Activated B cell treated with CpG ODN at 0.5 μM for 24 hours (primary cell): ENCODE measurements at regions of chr22 and their contacts with region 1.

Region 1: GRCh38 chr22:23716811-23717801 is 26.3 kb downstream of the RGL4 start:
- DNase-seq: peak; percentile 81
- ATAC-seq: peak; percentile 97
- H3K4me3 Mint-ChIP-seq: peak overlapping the region; percentile 81
- H3K27ac Mint-ChIP-seq: peak overlapping the region; percentile 69
- H3K4me1 Mint-ChIP-seq: peaks cover 16% of the 10 kb centered on the region
- H3K27me3 Mint-ChIP-seq: no peaks in the 10 kb centered on the region
- CTCF ChIP-seq: no peak

Region 2: DNA sequence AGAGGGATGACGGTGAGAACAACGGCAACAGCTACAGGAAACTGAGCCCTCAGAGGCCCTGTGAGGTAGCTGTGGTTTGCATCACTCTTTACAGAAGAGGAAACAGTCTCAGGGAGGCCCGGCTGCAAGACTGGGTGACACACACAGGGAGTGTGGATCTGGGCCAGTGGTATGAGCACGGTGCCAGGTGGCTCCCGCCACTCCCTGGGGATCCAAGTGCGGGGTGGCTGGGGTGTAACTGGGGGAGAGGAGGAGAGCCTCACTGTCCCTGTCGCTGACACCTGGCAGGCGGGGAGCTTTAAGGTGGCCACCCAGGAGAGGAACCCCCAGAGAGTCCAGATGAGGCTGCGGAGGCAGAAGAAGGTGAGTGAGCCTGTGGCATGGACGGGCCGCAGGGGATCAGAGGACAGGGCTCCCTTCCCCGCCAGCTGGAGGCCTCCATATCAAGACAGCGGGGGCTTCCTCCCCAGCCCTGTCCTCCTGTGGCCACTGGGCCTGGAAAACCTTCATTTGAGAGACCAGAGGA is 20.7 kb before region 1 on chr22:
- CTCF ChIA-PET with region 1: no interaction called
- POLR2A ChIA-PET with region 1: interaction called, 4 read pairs
- intact Hi-C with region 1: loop called (anchors 1 kb)
- DNase-seq: peak; percentile 52
- ATAC-seq: peak; percentile 99
- H3K4me3 Mint-ChIP-seq: peak overlapping the region; percentile 75
- H3K27ac Mint-ChIP-seq: peak overlapping the region; percentile 95
- H3K4me1 Mint-ChIP-seq: peaks cover 27% of the 10 kb centered on the region
- H3K27me3 Mint-ChIP-seq: no peaks in the 10 kb centered on the region
- CTCF ChIP-seq: no peak

Region 3: GRCh38 chr22:23706631-23707030 is 10.5 kb before region 1 on chr22:
- CTCF ChIA-PET with region 1: no interaction called
- POLR2A ChIA-PET with region 1: no interaction called
- intact Hi-C with region 1: no loop called
- DNase-seq: no peak
- ATAC-seq: no peak
- H3K4me3 Mint-ChIP-seq: no peak overlapping the region
- H3K27ac Mint-ChIP-seq: no peak overlapping the region
- H3K4me1 Mint-ChIP-seq: peaks cover 2% of the 10 kb centered on the region
- H3K27me3 Mint-ChIP-seq: no peaks in the 10 kb centered on the region
- CTCF ChIP-seq: no peak

Region 4: GRCh38 chr22:23786752-23787599 is 69.9 kb after region 1 on chr22 and contains the start of gene SMARCB1:
- CTCF ChIA-PET with region 1: no interaction called
- POLR2A ChIA-PET with region 1: interaction called, 3 read pairs
- intact Hi-C with region 1: loop called (anchors 1 kb)
- DNase-seq: peak; percentile 89
- ATAC-seq: peak; percentile 85
- H3K4me3 Mint-ChIP-seq: peak within 1 kb of the TSS; percentile 90
- H3K27ac Mint-ChIP-seq: peak within 1 kb of the TSS; percentile 88
- H3K4me1 Mint-ChIP-seq: peaks cover 51% of the 10 kb centered on the region
- H3K27me3 Mint-ChIP-seq: no peaks in the 10 kb centered on the region
- CTCF ChIP-seq: no peak
- total RNA-seq, gene SMARCB1: 156 and 161 TPM in 2 replicates

Region 5: GRCh38 chr22:23816156-23816976 is 99.3 kb after region 1 on chr22:
- CTCF ChIA-PET with region 1: no interaction called
- POLR2A ChIA-PET with region 1: no interaction called
- intact Hi-C with region 1: no loop called
- DNase-seq: no peak
- ATAC-seq: no peak
- H3K4me3 Mint-ChIP-seq: no peak overlapping the region
- H3K27ac Mint-ChIP-seq: no peak overlapping the region
- H3K4me1 Mint-ChIP-seq: peaks cover 51% of the 10 kb centered on the region
- H3K27me3 Mint-ChIP-seq: no peaks in the 10 kb centered on the region
- CTCF ChIP-seq: no peak

Region 6: DNA sequence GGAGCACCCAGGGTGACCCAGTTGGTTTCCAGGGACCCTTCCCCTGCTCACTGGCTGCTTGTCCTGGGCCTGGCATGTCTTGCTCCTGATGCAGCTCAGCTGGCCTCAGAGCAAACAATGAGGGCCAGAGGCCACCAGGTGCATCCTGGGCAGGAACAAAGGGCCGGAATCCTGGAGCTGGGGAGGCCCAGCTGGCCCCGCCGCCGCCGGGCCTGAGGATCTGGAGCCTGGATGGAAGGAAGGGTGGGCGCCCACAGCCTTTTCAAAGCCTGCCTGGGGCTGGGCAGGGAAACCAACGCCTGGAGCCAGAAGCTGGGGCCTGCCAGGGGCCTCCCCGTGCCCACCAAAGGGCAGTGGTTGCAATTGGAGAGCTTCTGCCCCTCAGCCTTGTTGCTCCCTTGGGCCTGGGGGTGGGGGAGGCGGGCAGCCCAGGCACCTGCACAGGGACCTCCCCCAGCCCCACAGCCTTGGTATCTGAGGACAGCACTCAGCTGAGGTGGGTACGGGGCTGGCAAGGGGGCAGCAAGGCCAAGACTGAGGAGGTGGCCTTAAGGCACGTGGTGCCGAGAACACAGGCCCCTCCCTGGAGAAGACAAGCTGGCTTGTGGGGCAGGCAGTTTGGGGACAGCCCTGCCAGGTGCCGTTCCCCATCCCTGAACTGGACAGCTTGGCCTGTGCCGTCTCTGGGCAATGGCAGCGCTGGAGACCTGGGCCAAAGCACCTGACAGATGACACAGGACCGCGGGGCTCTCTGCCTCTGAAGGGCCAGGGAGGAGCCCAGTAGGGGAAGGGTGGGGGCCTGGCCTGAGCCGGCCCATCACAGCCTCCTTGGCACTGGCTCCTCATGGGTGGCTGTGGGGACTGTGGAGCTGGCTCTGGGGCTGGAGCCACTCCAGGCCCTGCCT is 703.2 kb after region 1 on chr22:
- CTCF ChIA-PET with region 1: no interaction called
- POLR2A ChIA-PET with region 1: no interaction called
- intact Hi-C with region 1: no loop called
- DNase-seq: no peak
- ATAC-seq: no peak
- H3K4me3 Mint-ChIP-seq: no peak overlapping the region
- H3K27ac Mint-ChIP-seq: no peak overlapping the region
- H3K4me1 Mint-ChIP-seq: peaks cover 15% of the 10 kb centered on the region
- H3K27me3 Mint-ChIP-seq: no peaks in the 10 kb centered on the region
- CTCF ChIP-seq: no peak